Ovary (tissue), 10 donors: ENCODE measurements at regions of chr11 and their contacts with region 1.

Region 1: DNA sequence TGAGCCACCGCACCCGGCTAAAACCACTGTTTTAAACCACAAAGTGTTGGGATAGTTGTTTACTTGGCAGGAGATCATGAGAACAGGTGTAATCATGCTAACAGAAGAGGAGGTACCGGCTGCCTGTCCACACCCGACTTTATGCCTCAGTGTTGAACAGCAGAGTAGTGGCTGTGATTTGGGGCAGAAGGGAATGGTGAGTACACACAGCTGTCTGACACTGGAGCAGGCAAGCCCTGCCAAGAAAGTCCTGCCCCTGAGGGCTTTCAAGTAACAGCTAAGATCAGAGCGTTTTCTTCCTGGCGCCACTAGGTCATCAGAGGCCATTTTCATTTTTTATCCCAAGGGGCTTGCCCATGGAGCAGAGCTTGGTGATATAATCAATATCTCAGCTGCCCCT is 8.1 kb downstream of the CDKN1C start:
- DNase-seq: no peak
- H3K4me3 ChIP-seq: no peak overlapping the region
- H3K27ac ChIP-seq: no peak overlapping the region
- H3K4me1 ChIP-seq: peaks cover under 1% of the 10 kb centered on the region
- H3K27me3 ChIP-seq: no peaks in the 10 kb centered on the region
- CTCF ChIP-seq: no peak
- EP300 ChIP-seq: no peak
- POLR2A ChIP-seq: no peak

Region 2: DNA sequence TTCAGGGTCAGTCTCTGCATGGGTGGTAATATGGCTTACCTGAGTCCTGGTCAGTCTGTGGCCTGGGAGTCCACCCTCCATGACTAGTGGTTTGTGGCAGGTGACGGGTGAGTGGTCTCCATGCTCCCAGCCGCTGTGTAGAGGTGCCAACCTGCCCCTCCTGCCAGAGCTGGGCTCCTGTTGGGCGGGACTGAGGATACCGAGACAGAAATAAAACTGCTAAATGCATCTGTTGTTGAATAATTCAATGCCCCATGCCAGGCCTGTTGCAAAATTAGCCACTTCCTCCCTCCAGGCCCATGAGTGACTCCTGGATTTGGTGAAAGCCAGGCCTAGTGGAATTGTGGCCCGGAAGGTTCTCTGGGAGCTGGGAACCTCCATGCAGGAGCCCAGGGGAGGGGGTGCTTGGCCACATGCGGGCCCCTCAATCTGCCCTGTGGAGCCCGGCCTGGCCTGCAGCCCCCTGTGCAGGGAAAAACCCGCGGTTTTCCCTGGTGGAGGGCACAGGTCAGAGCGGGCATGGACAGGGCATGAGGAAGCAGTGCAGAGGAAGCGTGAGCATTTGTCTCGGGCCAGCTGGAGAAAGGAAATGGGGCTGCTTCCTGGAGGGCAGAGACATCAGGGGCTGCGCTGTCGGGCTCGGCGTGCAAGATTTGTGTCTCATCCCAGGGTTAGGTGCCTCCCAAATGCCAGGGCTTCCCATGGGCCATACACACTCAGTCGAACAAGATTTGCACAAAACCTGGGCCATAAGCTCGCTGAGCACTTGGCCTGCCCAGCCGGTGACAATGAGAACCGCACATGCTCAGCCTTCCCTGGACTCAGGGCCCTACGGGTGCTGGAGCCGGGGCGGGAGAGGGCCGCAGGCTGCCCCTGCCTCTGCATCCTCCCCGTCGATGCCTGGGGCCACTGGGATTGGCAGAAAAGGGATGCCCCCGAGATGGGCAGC is 365.8 kb before region 1 on chr11:
- intact Hi-C with region 1: no loop called
- DNase-seq: peak in 1 of 5 donors; percentile 10
- H3K4me3 ChIP-seq: no peak overlapping the region
- H3K27ac ChIP-seq: no peak overlapping the region
- H3K4me1 ChIP-seq: no peaks in the 10 kb centered on the region
- H3K27me3 ChIP-seq: no peaks in the 10 kb centered on the region
- CTCF ChIP-seq: no peak
- EP300 ChIP-seq: no peak
- POLR2A ChIP-seq: no peak

Region 3: GRCh38 chr11:2837096-2837601 is 40.3 kb before region 1 on chr11:
- intact Hi-C with region 1: loop called in 1 of 4 experiments (anchors 5 kb)
- DNase-seq: peak in 1 of 5 donors; percentile 55
- H3K4me3 ChIP-seq: no peak overlapping the region
- H3K27ac ChIP-seq: no peak overlapping the region
- H3K4me1 ChIP-seq: peaks cover 8% of the 10 kb centered on the region
- H3K27me3 ChIP-seq: no peaks in the 10 kb centered on the region
- CTCF ChIP-seq: no peak
- EP300 ChIP-seq: no peak
- POLR2A ChIP-seq: no peak